AG04450 (cell line): ENCODE measurements at regions of chr5 and their contacts with region 1.

Region 1: DNA sequence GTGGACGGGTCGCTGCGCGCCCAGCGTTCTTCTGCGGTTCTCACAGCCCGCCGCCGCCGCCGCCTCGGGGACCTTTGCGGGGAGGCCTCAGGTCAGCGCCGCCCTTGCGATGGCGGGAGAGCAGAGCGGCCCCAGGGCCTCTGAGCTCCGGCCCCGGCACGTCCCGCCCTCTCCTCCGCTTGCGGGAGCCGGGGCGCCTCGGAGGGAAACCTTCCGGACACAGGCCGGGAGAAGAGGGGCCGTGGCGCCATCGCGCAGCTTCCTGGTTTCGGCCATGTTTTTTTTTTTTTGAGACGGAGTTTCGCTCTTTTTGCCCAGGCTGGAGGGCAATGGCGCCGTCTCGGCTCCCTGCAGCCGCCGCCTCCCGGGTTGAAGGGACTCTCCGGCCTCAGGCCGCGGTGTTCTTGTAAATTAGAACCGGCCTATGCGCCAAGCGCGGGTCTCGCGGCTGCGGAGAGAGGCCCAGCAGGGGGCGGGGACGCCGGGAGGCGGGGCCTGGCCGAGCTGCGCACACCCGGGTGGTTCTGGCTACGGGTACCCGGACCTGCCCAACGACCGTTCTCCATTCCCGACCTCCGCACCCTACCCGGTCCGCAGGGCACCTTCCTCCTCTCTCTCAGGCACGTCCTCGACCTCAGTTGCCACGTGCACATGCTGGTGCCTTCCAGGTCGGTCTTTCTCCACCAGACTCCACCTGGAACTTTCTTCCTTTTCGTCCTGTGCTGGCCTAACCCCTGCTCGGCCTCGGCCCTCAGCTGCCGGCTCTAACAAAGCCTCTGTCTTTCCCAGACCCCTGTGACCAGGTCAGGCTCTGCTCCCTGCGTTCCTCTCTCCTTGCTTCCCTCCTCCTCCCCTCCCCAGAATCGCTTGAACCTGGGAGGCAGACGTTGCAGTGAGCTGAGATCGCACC is 28.8 kb upstream of the MGAT1 start:
- DNase-seq: peak; percentile 20
- H3K4me3 ChIP-seq: peak overlapping the region; percentile 73
- H3K27ac ChIP-seq: peak overlapping the region; percentile 94
- H3K27me3 ChIP-seq: no peaks in the 10 kb centered on the region
- CTCF ChIP-seq: peak; percentile 7; the same call in 1 of the 2 replicates

Region 2: GRCh38 chr5:180784497-180785097 is 46.8 kb before region 1 on chr5:
- CTCF ChIA-PET with region 1: interaction called, 5 read pairs
- POLR2A ChIA-PET with region 1: interaction called, 18 read pairs
- DNase-seq: peak; percentile 66
- H3K4me3 ChIP-seq: no peak overlapping the region
- H3K27ac ChIP-seq: no peak overlapping the region
- H3K27me3 ChIP-seq: no peaks in the 10 kb centered on the region
- CTCF ChIP-seq: peak; percentile 79

Region 3: GRCh38 chr5:180802325-180803180 is 28.8 kb before region 1 on chr5 and contains the start of gene MGAT1:
- CTCF ChIA-PET with region 1: no interaction called
- POLR2A ChIA-PET with region 1: interaction called, 14 read pairs
- DNase-seq: no peak
- H3K4me3 ChIP-seq: peak within 1 kb of the TSS; percentile 95
- H3K27ac ChIP-seq: peak within 1 kb of the TSS; percentile 97
- H3K27me3 ChIP-seq: no peaks in the 10 kb centered on the region
- CTCF ChIP-seq: no peak
- polyA plus RNA-seq, gene MGAT1: 96.2 and 121 TPM in 2 replicates

Region 4: DNA sequence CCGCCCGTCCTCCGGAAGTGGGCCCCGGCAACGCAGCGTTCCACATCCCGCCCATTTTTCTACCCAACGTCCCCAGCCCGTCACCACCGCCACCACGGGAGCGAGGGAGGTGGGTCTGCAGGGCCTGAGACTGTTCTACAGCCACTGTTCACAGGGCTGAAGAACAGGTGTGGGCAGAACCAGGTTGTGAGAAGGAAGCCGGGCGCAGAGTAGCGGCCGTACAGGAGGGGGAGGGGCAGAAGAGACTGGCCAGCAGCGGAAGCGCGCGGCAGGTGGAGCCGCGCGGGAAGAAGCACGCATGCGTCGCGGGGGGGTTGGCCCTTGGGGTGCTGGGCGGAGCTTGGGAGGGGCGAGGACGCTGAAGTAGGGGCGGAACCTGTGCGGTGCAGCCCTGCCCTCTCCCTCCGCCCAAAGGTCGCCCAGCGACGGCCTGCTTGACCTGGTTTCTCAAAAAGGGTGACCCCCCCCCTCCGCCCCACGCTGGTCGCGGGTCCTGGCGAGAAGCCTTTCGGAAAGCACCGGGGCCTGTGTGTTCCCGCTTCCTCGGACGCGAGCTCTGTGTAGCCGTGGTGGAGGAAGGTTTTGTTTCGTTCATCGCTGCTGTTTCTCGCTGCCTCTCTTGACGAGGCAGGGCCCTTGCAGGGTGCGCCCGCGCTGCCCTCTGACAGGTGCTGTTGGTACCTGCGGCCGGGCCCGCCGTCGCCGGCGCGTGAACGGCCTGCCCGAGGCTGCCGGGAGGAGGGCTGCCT is 21.0 kb before region 1 on chr5:
- CTCF ChIA-PET with region 1: interaction called, 4 read pairs
- POLR2A ChIA-PET with region 1: interaction called, 10 read pairs
- DNase-seq: peak; percentile 81
- H3K4me3 ChIP-seq: peak overlapping the region; percentile 93
- H3K27ac ChIP-seq: peak overlapping the region; percentile 80
- H3K27me3 ChIP-seq: no peaks in the 10 kb centered on the region
- CTCF ChIP-seq: no peak

Region 5: GRCh38 chr5:180860887-180861822 is 29.8 kb after region 1 on chr5 and contains the start of gene ZFP62:
- CTCF ChIA-PET with region 1: interaction called, 4 read pairs
- POLR2A ChIA-PET with region 1: interaction called, 11 read pairs
- DNase-seq: peak; percentile 71
- H3K4me3 ChIP-seq: peak within 1 kb of the TSS; percentile 98
- H3K27ac ChIP-seq: peak within 1 kb of the TSS; percentile 65
- H3K27me3 ChIP-seq: no peaks in the 10 kb centered on the region
- CTCF ChIP-seq: no peak
- polyA plus RNA-seq, gene ZFP62: 13.7 and 18.0 TPM in 2 replicates